HepG2 (cell line): ENCODE measurements at regions of chr6 and their contacts with region 1.

Region 1: DNA sequence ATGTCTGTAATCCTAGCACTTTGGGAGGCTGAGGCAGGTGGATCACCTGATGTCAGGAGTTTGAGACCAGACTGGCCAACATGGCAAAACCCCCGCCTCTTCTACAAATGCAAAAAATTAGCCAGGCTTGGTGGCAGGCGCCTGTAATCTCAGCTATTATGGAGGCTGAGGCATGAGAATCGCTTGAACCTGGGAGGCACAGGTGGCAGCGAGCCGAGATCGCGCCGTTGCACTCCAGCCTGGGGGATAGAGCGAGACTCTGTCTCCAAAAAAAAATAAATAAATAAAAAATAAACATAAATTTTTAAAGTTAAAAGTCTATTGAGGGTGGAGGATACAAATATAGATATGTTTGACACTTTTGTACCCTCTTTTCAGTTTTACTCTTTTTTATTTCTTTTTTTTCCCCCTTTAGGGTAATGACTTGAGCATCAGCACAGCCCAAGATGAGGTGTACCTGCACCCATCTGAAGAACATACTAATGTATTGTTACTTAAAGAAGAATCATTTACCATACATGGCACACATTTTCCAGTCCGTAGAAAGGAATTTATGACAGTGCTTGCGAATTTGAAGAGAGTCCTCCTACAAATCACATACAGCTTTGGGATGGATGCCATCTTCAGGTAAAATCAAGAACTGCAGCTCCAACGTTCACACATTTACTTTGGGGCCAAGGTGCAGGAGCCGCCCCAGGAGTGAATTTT is 368.9 kb downstream of the LAMA2 start:
- DNase-seq: peak; percentile 63
- ATAC-seq: peak; percentile 93
- H3K4me3 ChIP-seq: no peak overlapping the region
- H3K27ac ChIP-seq: no peak overlapping the region
- H3K4me1 ChIP-seq: no peaks in the 10 kb centered on the region
- H3K27me3 ChIP-seq: no peaks in the 10 kb centered on the region
- CTCF ChIP-seq: peak; percentile 85
- EP300 ChIP-seq: no peak
- POLR2A ChIP-seq: no peak
- RAD21 ChIP-seq: peak; percentile 69; the same call in 1 of the 2 replicates

Region 2: DNA sequence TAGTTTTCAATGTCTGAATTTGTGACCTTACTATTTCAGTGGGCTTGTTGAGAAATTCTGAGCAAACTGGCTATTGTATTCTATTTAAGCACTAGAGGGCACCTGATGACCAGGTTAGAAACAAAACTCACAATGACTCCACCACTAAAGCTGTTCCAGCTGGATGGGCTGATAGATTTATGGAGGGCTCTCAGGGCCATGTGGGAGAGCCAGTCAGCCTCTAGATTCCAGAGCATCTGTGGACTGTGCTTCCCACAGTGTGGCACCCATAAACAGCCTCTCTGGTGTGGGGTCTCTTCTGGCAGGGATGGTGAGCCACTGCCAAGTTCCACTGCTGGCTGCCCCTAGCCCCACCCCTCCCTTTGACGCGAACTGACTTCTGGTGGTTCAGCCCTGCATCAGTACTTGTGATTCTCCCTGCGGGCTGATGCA is 1645.7 kb before region 1 on chr6:
- CTCF ChIA-PET with region 1: interaction called, 4 read pairs
- POLR2A ChIA-PET with region 1: no interaction called
- in situ Hi-C with region 1: no loop called
- intact Hi-C with region 1: loop called (anchors 2 kb)
- DNase-seq: peak; percentile 44
- ATAC-seq: peak; percentile 93
- H3K4me3 ChIP-seq: no peak overlapping the region
- H3K27ac ChIP-seq: no peak overlapping the region
- H3K4me1 ChIP-seq: no peaks in the 10 kb centered on the region
- H3K27me3 ChIP-seq: no peaks in the 10 kb centered on the region
- CTCF ChIP-seq: peak; percentile 65
- EP300 ChIP-seq: no peak
- POLR2A ChIP-seq: no peak
- RAD21 ChIP-seq: peak; percentile 39; the same call in 1 of the 2 replicates

Region 3: GRCh38 chr6:128725271-128726233 is 526.3 kb before region 1 on chr6:
- CTCF ChIA-PET with region 1: no interaction called
- POLR2A ChIA-PET with region 1: no interaction called
- in situ Hi-C with region 1: no loop called
- intact Hi-C with region 1: loop called (anchors 1 kb)
- DNase-seq: peak; percentile 39
- ATAC-seq: peak; percentile 52; the same call in 1 of the 3 replicates
- H3K4me3 ChIP-seq: no peak overlapping the region
- H3K27ac ChIP-seq: no peak overlapping the region
- H3K4me1 ChIP-seq: no peaks in the 10 kb centered on the region
- H3K27me3 ChIP-seq: no peaks in the 10 kb centered on the region
- CTCF ChIP-seq: peak; percentile 59
- EP300 ChIP-seq: no peak
- POLR2A ChIP-seq: no peak
- RAD21 ChIP-seq: no peak

Region 4: DNA sequence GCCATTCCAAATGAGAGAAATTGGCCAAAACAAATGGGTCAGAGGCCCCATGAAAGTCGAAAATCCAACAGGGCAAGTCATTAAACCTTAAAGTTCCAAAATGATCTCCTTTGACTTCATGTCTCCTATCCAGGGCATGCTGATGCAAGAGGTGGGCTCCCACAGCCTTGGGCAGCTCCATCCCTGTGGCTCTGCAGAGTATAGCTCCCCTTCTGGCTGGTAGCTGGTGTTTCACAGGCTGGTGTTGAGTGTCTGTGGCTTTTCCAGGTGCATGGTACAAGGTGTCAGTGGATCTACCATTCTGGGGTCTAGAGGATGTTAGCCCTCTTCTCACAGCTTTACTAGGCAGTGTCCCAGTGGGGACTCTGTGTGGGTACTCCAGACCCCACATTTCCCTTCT is 484.1 kb before region 1 on chr6:
- CTCF ChIA-PET with region 1: no interaction called
- POLR2A ChIA-PET with region 1: no interaction called
- in situ Hi-C with region 1: no loop called
- intact Hi-C with region 1: no loop called
- DNase-seq: no peak
- ATAC-seq: no peak; the same call in 2 of the 3 replicates
- H3K4me3 ChIP-seq: no peak overlapping the region
- H3K27ac ChIP-seq: no peak overlapping the region
- H3K4me1 ChIP-seq: no peaks in the 10 kb centered on the region
- H3K27me3 ChIP-seq: no peaks in the 10 kb centered on the region
- CTCF ChIP-seq: no peak
- EP300 ChIP-seq: no peak
- POLR2A ChIP-seq: no peak
- RAD21 ChIP-seq: no peak

Region 5: DNA sequence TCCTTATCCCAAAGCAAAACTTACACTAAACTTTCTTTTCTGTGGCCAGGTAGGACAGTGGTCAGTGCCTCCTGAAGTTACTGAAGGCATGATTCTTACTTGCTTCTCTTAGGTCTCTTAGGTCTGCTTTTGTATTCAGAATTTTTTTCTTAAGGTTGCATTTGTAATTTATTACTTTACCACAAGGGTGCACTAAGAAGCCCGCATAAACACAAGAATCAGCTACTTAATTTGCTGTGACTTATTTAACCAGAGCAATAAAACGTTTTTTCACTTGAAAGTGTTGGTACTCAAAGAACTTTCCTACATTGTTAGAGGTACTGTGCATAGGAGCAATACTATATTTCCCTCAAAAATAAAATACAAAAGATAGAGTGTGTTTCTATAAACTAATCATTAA is 444.2 kb before region 1 on chr6:
- CTCF ChIA-PET with region 1: interaction called, 3 read pairs
- POLR2A ChIA-PET with region 1: no interaction called
- in situ Hi-C with region 1: loop called (anchors 10 kb)
- intact Hi-C with region 1: loop called (anchors 1 kb)
- DNase-seq: peak; percentile 16
- ATAC-seq: no peak
- H3K4me3 ChIP-seq: no peak overlapping the region
- H3K27ac ChIP-seq: no peak overlapping the region
- H3K4me1 ChIP-seq: no peaks in the 10 kb centered on the region
- H3K27me3 ChIP-seq: no peaks in the 10 kb centered on the region
- CTCF ChIP-seq: peak; percentile 28; the same call in 1 of the 2 replicates
- EP300 ChIP-seq: no peak
- POLR2A ChIP-seq: no peak
- RAD21 ChIP-seq: no peak

Region 6: DNA sequence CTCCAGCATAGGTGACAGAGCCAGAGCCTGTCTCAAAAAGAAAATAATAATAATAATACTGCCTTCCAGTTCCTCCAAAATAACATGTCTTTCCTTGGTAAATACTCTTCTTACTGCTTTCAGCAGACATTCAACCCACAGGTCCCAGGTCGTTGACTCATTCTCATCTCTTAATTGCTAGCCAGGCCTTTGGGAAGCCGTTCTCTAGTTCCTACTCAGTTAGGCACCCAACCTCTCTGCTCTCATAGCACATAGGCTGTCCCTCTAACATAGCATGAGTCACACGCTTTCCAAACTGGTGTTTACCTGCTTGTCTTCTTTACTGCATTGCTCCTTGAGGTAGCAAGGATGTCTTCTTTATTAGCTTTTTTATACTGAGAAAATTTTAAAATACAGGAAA is 270.1 kb before region 1 on chr6:
- CTCF ChIA-PET with region 1: no interaction called
- POLR2A ChIA-PET with region 1: no interaction called
- in situ Hi-C with region 1: no loop called
- intact Hi-C with region 1: loop called (anchors 1 kb)
- DNase-seq: no peak
- ATAC-seq: no peak
- H3K4me3 ChIP-seq: no peak overlapping the region
- H3K27ac ChIP-seq: no peak overlapping the region
- H3K4me1 ChIP-seq: no peaks in the 10 kb centered on the region
- H3K27me3 ChIP-seq: no peaks in the 10 kb centered on the region
- CTCF ChIP-seq: no peak
- EP300 ChIP-seq: no peak
- POLR2A ChIP-seq: no peak
- RAD21 ChIP-seq: no peak

Region 7: DNA sequence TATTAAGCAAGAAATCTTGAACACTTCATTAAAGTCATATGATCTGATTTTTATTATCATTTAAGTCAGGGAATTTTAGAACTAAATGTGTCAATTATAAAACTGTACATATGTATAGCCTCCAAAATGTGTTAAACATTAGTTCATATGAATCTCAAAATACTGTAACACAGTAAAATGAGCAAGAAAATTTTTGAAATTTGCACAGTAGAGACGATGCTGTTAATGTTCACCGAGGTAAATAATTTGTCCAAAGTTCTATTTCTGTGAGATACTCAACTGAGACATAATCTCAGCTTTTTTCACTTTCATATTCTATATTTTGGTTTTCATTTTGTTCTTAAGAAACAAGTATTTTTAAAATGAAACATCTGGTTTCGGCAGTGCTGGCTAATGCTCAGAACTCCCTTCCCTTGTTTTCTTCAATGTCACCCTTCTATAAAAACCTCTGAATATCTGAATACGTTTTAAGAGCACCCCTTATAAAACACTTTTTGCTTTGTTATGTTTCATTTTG is 15.8 kb before region 1 on chr6:
- CTCF ChIA-PET with region 1: no interaction called
- POLR2A ChIA-PET with region 1: no interaction called
- in situ Hi-C with region 1: no loop called
- intact Hi-C with region 1: no loop called
- DNase-seq: no peak
- ATAC-seq: no peak
- H3K4me3 ChIP-seq: no peak overlapping the region
- H3K27ac ChIP-seq: no peak overlapping the region
- H3K4me1 ChIP-seq: no peaks in the 10 kb centered on the region
- H3K27me3 ChIP-seq: no peaks in the 10 kb centered on the region
- CTCF ChIP-seq: no peak
- EP300 ChIP-seq: no peak
- POLR2A ChIP-seq: no peak
- RAD21 ChIP-seq: no peak